ENCODE measurements at regions of chr2 and their contacts with region 1.

Region 1: GRCh38 chr2:26959331-26959730 is 11.1 kb upstream of the MAPRE3 start:
- DNase-seq: no peak
- H3K4me3 ChIP-seq: no peak overlapping the region
- H3K27ac ChIP-seq: no peak overlapping the region
- H3K4me1 ChIP-seq: peaks cover 0 to 3% of the 10 kb centered on the region in 2 experiments; a peak in 1 of 4 replicates
- H3K27me3 ChIP-seq: peaks cover 48% of the 10 kb centered on the region
- CTCF ChIP-seq: no peak
- EP300 ChIP-seq: no peak
- RAD21 ChIP-seq: no peak

Region 2: DNA sequence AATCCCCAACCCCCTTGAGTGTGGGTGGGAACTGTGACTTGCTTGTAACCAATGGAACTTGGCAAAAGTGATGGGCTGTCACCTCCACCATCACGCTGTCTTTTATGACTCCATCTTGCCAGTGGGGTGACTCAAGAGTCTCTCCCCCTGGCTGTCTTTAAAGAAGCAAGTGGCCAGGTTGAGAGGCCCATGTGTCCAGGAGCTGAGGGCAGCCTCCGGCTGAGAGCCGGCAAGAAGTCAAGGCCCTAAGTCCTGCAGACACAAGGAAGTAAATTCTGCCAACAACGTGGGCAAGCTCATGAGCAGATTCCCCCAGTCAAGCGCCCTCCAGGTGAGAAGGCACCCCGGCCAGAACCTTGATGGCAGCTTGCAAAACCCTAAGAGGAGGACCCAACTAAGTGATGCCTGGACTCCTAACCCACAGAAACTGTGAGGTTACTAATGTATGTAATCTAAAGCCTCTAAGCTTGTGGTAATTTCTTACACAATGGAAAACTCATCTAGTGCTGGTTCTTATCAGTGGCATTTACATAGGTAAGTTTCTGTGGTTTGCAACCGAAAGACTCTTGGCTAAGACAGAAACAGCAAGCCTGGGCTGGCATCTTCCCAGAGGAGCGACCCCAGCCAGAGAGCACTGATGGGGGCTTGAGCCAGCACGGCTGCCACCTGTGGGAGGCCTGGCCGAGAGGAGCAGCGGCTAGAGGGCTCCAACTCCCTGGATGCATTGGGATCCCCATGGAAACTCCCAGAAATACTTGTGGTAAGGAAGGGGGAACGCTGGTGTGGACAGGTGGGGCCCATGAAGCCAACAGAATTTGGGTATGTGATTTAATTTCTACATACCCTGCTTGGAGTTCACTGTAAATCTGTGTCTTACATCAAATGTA is 367.5 kb before region 1 on chr2:
- CTCF ChIA-PET with region 1: no interaction called
- POLR2A ChIA-PET with region 1: no interaction called
- DNase-seq: no peak
- H3K4me3 ChIP-seq: no peak overlapping the region
- H3K27ac ChIP-seq: no peak overlapping the region
- H3K4me1 ChIP-seq: peaks cover 0 to 10% of the 10 kb centered on the region in 2 experiments; a peak in 1 of 4 replicates
- H3K27me3 ChIP-seq: peaks cover 82% of the 10 kb centered on the region
- CTCF ChIP-seq: no peak
- EP300 ChIP-seq: no peak
- RAD21 ChIP-seq: no peak

Region 3: DNA sequence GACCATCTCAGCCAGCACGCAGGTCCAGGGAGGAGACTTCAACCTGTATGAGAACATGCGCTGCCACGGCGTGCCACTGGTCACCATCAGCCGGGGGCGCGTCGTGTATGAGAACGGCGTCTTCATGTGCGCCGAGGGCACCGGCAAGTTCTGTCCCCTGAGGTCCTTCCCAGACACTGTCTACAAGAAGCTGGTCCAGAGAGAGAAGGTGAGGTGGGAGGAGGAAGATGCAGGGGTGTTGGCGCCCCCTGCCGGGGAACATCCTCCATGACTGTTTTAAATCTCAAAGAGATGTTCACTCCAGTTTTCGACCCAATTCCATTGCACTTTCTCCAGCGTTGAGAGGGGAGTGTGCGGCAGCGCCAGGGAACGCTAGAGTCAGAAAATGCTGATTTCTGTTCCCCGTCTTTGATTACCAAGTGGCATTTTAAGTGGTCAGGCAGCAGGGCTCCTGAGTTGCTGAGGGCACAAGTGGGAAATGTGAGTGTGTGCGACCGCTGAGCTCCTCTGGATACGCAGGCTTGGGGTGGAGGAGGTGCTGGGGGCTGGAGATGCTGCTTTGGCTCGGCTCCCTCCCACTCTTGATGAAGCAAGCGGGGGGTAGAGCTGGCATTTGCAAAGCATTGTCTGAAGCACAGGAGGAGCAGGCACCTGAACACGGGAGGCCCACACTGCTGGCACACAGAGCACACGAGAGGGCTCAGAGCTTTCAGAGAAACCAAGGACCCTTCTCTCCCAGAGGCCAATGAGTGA is 16.6 kb before region 1 on chr2:
- CTCF ChIA-PET with region 1: interaction called, 242 read pairs
- POLR2A ChIA-PET with region 1: no interaction called
- DNase-seq: peak; percentile 90
- H3K4me3 ChIP-seq: no peak overlapping the region
- H3K27ac ChIP-seq: no peak overlapping the region
- H3K4me1 ChIP-seq: peaks cover 0 to 16% of the 10 kb centered on the region in 2 experiments; a peak in 1 of 4 replicates
- H3K27me3 ChIP-seq: peaks cover 38% of the 10 kb centered on the region; the same call in 1 of the 2 replicates
- CTCF ChIP-seq: peak; percentile 77
- EP300 ChIP-seq: no peak
- RAD21 ChIP-seq: peak; percentile 89

Region 4: DNA sequence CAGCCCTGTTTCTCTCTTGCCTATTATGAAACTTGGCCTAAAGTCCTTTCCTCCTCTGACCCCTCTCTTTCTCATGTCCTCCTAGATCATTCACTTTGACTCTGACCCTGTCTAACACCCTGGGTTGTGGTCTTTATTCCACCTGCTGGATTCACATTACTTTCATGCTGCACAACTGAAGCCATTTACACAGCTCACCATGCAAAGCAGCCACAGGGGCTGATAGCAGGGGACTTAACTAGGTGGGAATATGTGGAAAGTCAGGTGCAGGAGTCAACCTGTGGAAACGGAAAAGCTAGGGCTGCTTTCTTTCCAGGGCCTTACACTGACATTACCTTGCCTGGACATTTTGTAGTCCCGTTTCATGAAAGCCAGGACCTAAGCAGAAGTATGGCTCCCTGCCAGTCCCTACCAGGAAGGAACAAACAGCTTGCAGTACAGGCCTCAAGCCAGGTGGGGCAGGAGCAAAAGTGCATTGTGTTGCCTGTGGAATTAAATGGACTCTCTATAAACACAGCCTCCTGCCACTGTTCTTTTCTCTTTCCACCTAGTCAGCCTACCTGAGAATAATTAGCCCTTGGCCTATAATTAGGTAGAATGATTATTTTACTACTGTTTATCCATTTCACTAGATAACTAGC is 22.9 kb after region 1 on chr2:
- CTCF ChIA-PET with region 1: interaction called, 257 read pairs
- POLR2A ChIA-PET with region 1: no interaction called
- DNase-seq: peak; percentile 76
- H3K4me3 ChIP-seq: no peak overlapping the region
- H3K27ac ChIP-seq: peak overlapping the region in 1 of 2 experiments; percentile 56; a peak in 1 of 4 replicates
- H3K4me1 ChIP-seq: peaks cover 0 to 25% of the 10 kb centered on the region in 2 experiments; a peak in 1 of 4 replicates
- H3K27me3 ChIP-seq: no peaks in the 10 kb centered on the region
- CTCF ChIP-seq: peak; percentile 38; the same call in 1 of the 2 replicates
- EP300 ChIP-seq: peak in 1 of 2 experiments; percentile 24; a peak in 1 of 4 replicates
- RAD21 ChIP-seq: peak; percentile 26; the same call in 1 of the 2 replicates

Region 5: GRCh38 chr2:27040282-27040681 is 81.0 kb after region 1 on chr2:
- CTCF ChIA-PET with region 1: interaction called, 22 read pairs
- POLR2A ChIA-PET with region 1: no interaction called
- DNase-seq: no peak
- H3K4me3 ChIP-seq: no peak overlapping the region
- H3K27ac ChIP-seq: no peak overlapping the region
- H3K4me1 ChIP-seq: peaks cover 0 to 7% of the 10 kb centered on the region in 2 experiments; a peak in 1 of 4 replicates
- H3K27me3 ChIP-seq: no peaks in the 10 kb centered on the region
- CTCF ChIP-seq: no peak
- EP300 ChIP-seq: no peak
- RAD21 ChIP-seq: no peak

Region 6: DNA sequence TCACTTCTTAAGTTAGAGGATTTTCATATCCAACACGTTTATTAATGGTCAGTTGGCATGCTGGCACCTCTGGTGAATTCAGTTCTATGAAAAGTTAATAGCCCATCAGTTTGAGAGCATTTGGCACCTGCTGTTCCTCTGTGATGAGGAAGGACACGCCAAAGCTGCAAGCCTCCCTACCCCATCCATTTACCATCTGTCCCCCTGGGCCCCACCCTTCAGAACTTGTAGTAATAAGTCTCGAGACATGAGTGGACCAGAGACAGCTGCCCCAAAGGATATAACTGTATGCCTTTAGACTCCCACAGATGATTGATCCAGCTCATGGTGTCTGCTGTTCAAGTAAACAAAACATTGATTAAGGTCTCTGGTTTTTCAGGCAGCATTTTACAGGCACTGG is 105.8 kb after region 1 on chr2:
- CTCF ChIA-PET with region 1: interaction called, 11 read pairs
- POLR2A ChIA-PET with region 1: no interaction called
- DNase-seq: no peak
- H3K4me3 ChIP-seq: no peak overlapping the region
- H3K27ac ChIP-seq: no peak overlapping the region
- H3K4me1 ChIP-seq: peaks cover 12 to 25% of the 10 kb centered on the region in 2 experiments
- H3K27me3 ChIP-seq: no peaks in the 10 kb centered on the region
- CTCF ChIP-seq: no peak
- EP300 ChIP-seq: no peak
- RAD21 ChIP-seq: no peak

Region 7: DNA sequence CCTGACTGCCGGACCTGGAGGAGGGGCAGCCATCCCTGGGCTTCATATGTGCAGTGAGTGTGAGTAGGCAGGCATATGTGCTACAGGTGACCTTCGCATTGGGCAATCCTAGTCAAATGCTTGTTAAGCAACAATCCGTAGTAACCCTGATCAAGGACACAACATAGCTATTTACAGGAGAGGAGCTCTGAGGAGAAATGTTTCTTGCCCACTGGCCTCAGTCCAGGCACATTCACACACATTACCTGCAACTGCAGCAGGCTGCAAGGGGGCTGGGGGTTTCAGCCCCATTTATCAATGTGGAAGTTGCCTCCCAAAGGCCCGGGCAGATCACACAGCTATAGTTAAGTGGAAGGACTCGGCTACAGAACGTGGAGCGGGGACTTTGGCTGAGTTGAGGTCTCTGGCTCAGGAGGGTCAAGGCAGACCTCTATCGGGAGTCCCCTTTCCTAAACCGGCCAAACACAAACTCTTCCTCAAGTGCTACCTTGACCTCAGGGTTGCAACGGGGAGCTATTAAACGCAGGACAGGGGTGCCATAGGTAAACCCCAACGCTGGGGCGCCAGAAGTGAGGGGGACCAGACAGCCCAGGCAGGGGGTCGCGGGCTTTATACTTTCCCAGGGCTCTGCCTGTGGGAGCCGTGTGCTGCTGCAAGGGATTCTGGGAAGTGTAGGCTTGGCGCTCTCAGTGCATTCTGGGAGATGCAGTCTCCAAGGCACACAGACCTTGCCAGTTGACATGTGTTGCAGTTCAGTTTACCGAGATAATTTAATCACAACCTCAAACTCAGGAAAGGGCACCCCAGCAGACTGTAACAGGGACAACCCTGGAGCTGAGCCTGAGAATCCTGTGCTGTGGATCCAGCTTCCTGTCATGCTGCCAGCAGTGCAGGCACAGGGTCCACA is 136.7 kb after region 1 on chr2:
- CTCF ChIA-PET with region 1: interaction called, 32 read pairs
- POLR2A ChIA-PET with region 1: no interaction called
- DNase-seq: peak; percentile 91
- H3K4me3 ChIP-seq: peak overlapping the region in 1 of 2 experiments; percentile 43; a peak in 2 of 4 replicates
- H3K27ac ChIP-seq: peak overlapping the region in 1 of 2 experiments; percentile 92; a peak in 2 of 4 replicates
- H3K4me1 ChIP-seq: peaks cover 4 to 21% of the 10 kb centered on the region in 2 experiments; a peak in 2 of 4 replicates
- H3K27me3 ChIP-seq: no peaks in the 10 kb centered on the region
- CTCF ChIP-seq: no peak
- EP300 ChIP-seq: no peak
- RAD21 ChIP-seq: peak; percentile 35

Region 8: DNA sequence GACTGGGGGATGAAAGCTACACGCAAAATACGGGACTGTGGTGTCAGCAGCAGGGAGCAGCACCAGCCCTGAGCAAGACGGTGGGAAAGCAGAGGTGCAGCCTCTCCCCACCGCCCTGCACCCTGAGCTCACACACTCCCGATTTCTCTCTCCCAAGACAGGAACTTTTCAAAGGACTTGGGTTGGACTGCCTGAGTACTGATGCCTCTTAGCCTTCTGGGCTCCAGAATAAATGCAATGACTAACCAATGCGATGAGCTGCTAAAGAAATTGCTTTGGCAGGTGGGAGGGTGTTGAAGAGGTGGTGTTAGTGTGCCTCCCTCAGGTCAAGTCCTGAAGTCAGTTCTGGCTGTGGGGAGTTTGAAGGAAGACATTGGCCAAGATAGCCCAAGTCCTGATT is 332.5 kb after region 1 on chr2:
- CTCF ChIA-PET with region 1: interaction called, 17 read pairs
- POLR2A ChIA-PET with region 1: no interaction called
- DNase-seq: no peak
- H3K4me3 ChIP-seq: no peak overlapping the region
- H3K27ac ChIP-seq: no peak overlapping the region
- H3K4me1 ChIP-seq: peaks cover 2 to 13% of the 10 kb centered on the region in 2 experiments; a peak in 3 of 4 replicates
- H3K27me3 ChIP-seq: no peaks in the 10 kb centered on the region
- CTCF ChIP-seq: peak; percentile 38
- EP300 ChIP-seq: no peak
- RAD21 ChIP-seq: peak; percentile 26

Region 9: GRCh38 chr2:27663463-27664249 is 704.3 kb after region 1 on chr2 and contains the starts of genes SLC4A1AP and SUPT7L:
- CTCF ChIA-PET with region 1: no interaction called
- POLR2A ChIA-PET with region 1: no interaction called
- DNase-seq: peak; percentile 85
- H3K4me3 ChIP-seq: peak within 1 kb of the TSS; percentile 91 to 99
- H3K27ac ChIP-seq: peak within 1 kb of the TSS; percentile 92 to 100
- H3K4me1 ChIP-seq: peaks cover 16 to 24% of the 10 kb centered on the region in 2 experiments; a peak in 3 of 4 replicates
- H3K27me3 ChIP-seq: no peaks in the 10 kb centered on the region
- CTCF ChIP-seq: no peak
- EP300 ChIP-seq: no peak
- RAD21 ChIP-seq: no peak
- polyA plus RNA-seq, gene SLC4A1AP: 9.4 and 9.8 TPM in 2 replicates
- polyA plus RNA-seq, gene SUPT7L: 49.7 and 69.3 TPM in 2 replicates